K562 (cell line): ENCODE measurements at regions of chr3 and their contacts with region 1.

Region 1: DNA sequence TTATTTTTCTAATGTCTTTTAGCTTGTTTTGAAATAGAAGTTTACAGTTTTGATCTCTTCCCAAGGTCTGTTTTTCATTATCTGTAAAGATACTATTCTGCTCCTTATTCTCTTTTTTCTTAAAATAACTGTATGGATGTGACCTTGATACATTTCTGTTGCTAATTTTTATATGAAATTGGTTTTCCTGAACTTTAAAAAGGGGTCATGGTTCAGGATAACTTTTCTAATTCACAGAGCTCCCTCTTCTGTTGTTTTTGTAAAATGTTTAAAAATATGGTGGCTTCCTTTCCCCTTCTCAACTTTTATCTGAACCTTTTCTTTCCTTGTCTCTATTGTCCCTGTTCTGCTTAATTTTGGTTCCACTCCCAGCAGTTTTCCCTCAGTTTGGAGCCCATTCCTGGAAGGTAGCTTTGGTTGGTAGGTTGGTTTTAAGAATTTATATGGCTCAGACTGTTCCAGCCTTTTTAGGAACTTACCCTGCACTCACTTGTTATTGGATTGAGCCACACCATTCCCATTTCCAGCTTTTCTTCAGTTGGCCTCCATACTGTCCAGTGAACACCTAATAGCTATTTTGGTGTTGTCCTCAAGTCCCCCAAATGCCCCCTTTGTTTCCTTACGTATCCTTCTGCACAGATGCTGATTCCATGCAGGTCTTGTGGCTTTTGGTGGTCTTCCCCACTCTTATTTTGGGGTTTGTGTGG is 70.3 kb downstream of the SLMAP start:
- DNase-seq: no peak
- ATAC-seq: no peak
- H3K4me3 ChIP-seq: no peak overlapping the region
- H3K27ac ChIP-seq: no peak overlapping the region
- H3K4me1 ChIP-seq: no peaks in the 10 kb centered on the region; a peak in 1 of 5 replicates
- H3K27me3 ChIP-seq: no peaks in the 10 kb centered on the region
- CTCF ChIP-seq: peak in 1 of 3 experiments; percentile 55; a peak in 2 of 6 replicates
- EP300 ChIP-seq: no peak
- POLR2A ChIP-seq: no peak
- RAD21 ChIP-seq: peak; percentile 55 to 69

Region 2: DNA sequence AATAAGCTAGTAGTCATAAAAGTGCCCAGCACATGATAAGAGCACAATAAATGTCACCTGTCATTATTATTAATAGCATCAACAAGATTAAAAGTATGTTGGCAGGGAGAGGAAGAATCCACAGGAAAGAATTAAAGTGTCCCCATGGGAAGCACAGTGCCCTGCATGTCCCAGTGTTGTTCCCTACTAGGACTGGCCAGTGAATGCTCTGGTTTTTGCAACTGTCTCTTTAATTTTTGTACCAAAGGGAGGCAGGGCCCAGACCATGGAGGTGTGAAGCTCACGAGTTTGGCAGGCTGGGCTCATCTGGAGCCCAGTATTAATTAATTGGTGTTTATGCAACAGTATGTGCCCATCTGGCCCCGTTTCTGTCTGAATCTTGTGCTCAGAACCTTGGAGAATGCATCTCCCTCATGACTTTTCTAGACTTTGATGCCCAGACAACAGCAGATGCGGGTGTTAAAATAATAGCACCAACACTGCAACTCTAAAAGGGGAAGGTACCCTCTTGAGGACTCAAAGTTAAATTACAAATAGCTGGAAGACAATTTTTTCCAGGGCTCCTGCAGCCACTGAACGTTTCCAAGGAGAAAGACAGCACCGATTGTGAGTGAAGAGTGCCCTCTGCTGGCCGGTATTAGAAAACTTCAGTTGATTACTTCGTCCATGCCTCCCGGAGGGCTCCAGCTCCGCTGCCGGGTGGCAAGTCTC is 837.8 kb before region 1 on chr3:
- CTCF ChIA-PET with region 1: no interaction called
- POLR2A ChIA-PET with region 1: no interaction called
- in situ Hi-C with region 1: no loop called
- intact Hi-C with region 1: no loop called
- DNase-seq: peak; percentile 40 to 75 (median 62)
- ATAC-seq: peak; percentile 91
- H3K4me3 ChIP-seq: no peak overlapping the region
- H3K27ac ChIP-seq: no peak overlapping the region
- H3K4me1 ChIP-seq: no peaks in the 10 kb centered on the region
- H3K27me3 ChIP-seq: peaks cover 0 to 14% of the 10 kb centered on the region in 2 experiments; a peak in 2 of 5 replicates
- CTCF ChIP-seq: peak; percentile 61 to 77 (median 67)
- EP300 ChIP-seq: no peak
- POLR2A ChIP-seq: no peak
- RAD21 ChIP-seq: peak; percentile 79 to 83

Region 3: DNA sequence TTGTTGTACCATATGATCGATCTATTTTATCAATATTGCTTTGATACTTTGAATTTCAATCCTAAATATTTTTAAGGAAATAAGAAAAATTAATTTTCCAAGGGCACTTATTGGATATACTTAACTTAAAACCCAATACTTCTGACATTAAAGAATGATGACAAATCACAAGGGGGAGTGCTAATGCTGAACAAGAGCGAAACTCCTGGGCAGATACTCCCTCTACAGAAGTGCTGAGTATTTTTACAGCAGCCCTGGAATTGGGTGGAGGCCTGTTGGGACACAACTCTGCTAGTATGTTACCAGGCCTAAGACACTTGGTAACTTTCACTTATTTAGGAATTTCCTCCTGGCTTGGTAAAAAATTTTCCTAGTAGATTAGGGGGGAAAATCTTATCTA is 179.7 kb before region 1 on chr3:
- CTCF ChIA-PET with region 1: interaction called, 10 read pairs
- POLR2A ChIA-PET with region 1: no interaction called
- in situ Hi-C with region 1: no loop called
- intact Hi-C with region 1: loop called (anchors 10 kb)
- DNase-seq: peak in 3 of 4 experiments; percentile 5 to 12 (median 5)
- ATAC-seq: 0 out of 3 replicates have a peak, but pooled peaks have one; percentile 46
- H3K4me3 ChIP-seq: no peak overlapping the region
- H3K27ac ChIP-seq: no peak overlapping the region
- H3K4me1 ChIP-seq: no peaks in the 10 kb centered on the region
- H3K27me3 ChIP-seq: no peaks in the 10 kb centered on the region
- CTCF ChIP-seq: peak; percentile 5 to 41 (median 12); a peak in 2 of 6 replicates
- EP300 ChIP-seq: no peak
- POLR2A ChIP-seq: no peak
- RAD21 ChIP-seq: peak; percentile 13 to 44; a peak in 3 of 4 replicates